Astrocyte of the cerebellum (primary cell): ENCODE measurements at regions of chr15 and their contacts with region 1.

Region 1: GRCh38 chr15:71261909-71262308 is 146.6 kb downstream of the THSD4 start:
- DNase-seq: no peak
- H3K4me3 ChIP-seq: no peak overlapping the region
- CTCF ChIP-seq: no peak

Region 2: GRCh38 chr15:71212146-71212545 is 49.8 kb before region 1 on chr15:
- in situ Hi-C with region 1: loop called (anchors 5 kb)
- DNase-seq: no peak
- H3K4me3 ChIP-seq: no peak overlapping the region
- CTCF ChIP-seq: no peak

Region 3: GRCh38 chr15:71647487-71647808 is 385.5 kb after region 1 on chr15:
- in situ Hi-C with region 1: no loop called
- DNase-seq: no peak
- H3K4me3 ChIP-seq: no peak overlapping the region
- CTCF ChIP-seq: no peak